ENCODE measurements at regions of chr9 and their contacts with region 1.

Region 1: DNA sequence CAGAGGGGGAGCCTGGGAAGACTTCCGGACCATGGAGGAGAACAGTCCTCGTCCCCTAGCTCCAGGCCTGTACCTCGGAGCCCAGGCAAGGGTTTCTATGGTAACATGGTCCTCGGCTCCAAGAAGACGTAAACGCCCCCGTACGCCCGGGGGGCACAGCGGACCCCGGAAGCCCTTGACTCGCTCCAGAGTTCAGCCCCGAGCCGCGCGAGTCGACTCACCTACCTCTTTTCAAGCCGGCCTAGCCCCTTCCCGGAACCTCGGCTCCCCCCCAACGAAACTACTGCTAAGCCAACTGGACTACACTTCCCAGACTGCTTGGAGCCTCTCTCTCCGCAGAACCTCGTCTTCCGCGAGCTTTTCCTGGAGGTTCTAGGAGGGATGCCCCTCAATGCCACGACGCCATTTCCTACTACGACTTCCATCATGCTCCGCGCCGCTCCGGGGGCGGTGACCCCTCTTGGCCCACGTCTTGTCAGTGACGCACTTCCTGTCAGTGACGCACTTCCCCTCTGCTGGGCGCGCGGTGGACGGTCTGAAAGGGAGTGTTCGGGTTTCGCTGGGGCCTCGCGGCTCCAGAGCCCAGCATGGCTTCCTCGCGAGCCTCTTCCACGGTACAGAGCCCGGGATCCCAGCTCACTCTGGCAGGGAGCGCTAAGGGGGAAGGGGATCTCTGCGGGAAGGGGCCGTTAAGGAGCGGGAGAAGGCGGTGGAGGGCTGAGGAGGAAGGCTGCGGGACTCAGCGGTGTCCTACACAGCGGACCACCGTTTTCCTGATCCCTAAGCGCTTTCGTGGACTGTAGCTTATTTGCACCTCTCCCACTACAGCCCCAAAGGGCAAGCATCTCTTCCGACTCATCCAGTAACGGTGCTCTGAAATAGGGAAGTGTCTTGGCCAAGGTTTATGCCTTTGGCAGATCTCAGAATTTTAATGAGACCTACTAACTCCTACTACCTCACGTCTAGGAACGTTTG is at the starts of genes CDC26 and PRPF4:
- DNase-seq: peak; percentile 95
- ATAC-seq: peak; percentile 89
- H3K4me3 ChIP-seq: peak within 1 kb of the TSS; percentile 75 to 98 (median 84)
- H3K4me3 Mint-ChIP-seq: no peak within 1 kb of the TSS
- H3K27ac ChIP-seq: peak within 1 kb of the TSS; percentile 94 to 97
- H3K27ac Mint-ChIP-seq: no peak within 1 kb of the TSS
- H3K4me1 ChIP-seq: peaks cover 9 to 16% of the 10 kb centered on the region in 2 donors
- H3K4me1 Mint-ChIP-seq: peaks cover 12% of the 10 kb centered on the region
- H3K27me3 ChIP-seq: no peaks in the 10 kb centered on the region
- H3K27me3 Mint-ChIP-seq: no peaks in the 10 kb centered on the region
- CTCF ChIP-seq: no peak
- total RNA-seq, gene CDC26: 28.9 and 32.9 TPM in 2 replicates
- total RNA-seq, gene PRPF4: 28.2 and 30.8 TPM in 2 replicates

Region 2: GRCh38 chr9:112914514-112914913 is 360.9 kb before region 1 on chr9:
- CTCF ChIA-PET with region 1: no interaction called
- POLR2A ChIA-PET with region 1: no interaction called
- intact Hi-C with region 1: no loop called
- DNase-seq: no peak
- ATAC-seq: no peak
- H3K4me3 ChIP-seq: no peak overlapping the region
- H3K4me3 Mint-ChIP-seq: no peak overlapping the region
- H3K27ac ChIP-seq: no peak overlapping the region
- H3K27ac Mint-ChIP-seq: no peak overlapping the region
- H3K4me1 ChIP-seq: no peaks in the 10 kb centered on the region
- H3K4me1 Mint-ChIP-seq: no peaks in the 10 kb centered on the region
- H3K27me3 ChIP-seq: no peaks in the 10 kb centered on the region
- H3K27me3 Mint-ChIP-seq: peaks cover 29% of the 10 kb centered on the region
- CTCF ChIP-seq: no peak

Region 3: GRCh38 chr9:113150670-113151611 is 124.5 kb before region 1 on chr9 and contains the start of gene SLC31A2:
- CTCF ChIA-PET with region 1: interaction called, 4 read pairs
- POLR2A ChIA-PET with region 1: interaction called, 3 read pairs
- intact Hi-C with region 1: loop called (anchors 1 kb)
- DNase-seq: peak; percentile 85
- ATAC-seq: peak; percentile 93
- H3K4me3 ChIP-seq: peak within 1 kb of the TSS; percentile 73 to 83 (median 76)
- H3K4me3 Mint-ChIP-seq: peak within 1 kb of the TSS; percentile 88
- H3K27ac ChIP-seq: peak within 1 kb of the TSS in 1 of 2 donors; percentile 25
- H3K27ac Mint-ChIP-seq: peak within 1 kb of the TSS; percentile 50
- H3K4me1 ChIP-seq: peaks cover 0 to 19% of the 10 kb centered on the region in 2 donors
- H3K4me1 Mint-ChIP-seq: peaks cover 11% of the 10 kb centered on the region
- H3K27me3 ChIP-seq: no peaks in the 10 kb centered on the region
- H3K27me3 Mint-ChIP-seq: peaks cover 2% of the 10 kb centered on the region
- CTCF ChIP-seq: peak; percentile 56
- total RNA-seq, gene SLC31A2: 2.3 and 3.0 TPM in 2 replicates

Region 4: GRCh38 chr9:113340017-113340699 is 64.7 kb after region 1 on chr9 and contains the start of gene WDR31:
- CTCF ChIA-PET with region 1: interaction called, 17 read pairs
- POLR2A ChIA-PET with region 1: interaction called, 3 read pairs
- intact Hi-C with region 1: loop called (anchors 1 kb)
- DNase-seq: peak; percentile 84
- ATAC-seq: peak; percentile 97
- H3K4me3 ChIP-seq: peak within 1 kb of the TSS; percentile 42 to 85 (median 73)
- H3K4me3 Mint-ChIP-seq: peak within 1 kb of the TSS; percentile 90
- H3K27ac ChIP-seq: peak within 1 kb of the TSS in 1 of 2 donors; percentile 41
- H3K27ac Mint-ChIP-seq: peak within 1 kb of the TSS; percentile 84
- H3K4me1 ChIP-seq: peaks cover 8 to 12% of the 10 kb centered on the region in 2 donors
- H3K4me1 Mint-ChIP-seq: peaks cover 16% of the 10 kb centered on the region
- H3K27me3 ChIP-seq: no peaks in the 10 kb centered on the region
- H3K27me3 Mint-ChIP-seq: peaks cover 8% of the 10 kb centered on the region
- CTCF ChIP-seq: no peak
- total RNA-seq, gene WDR31: 0.62 and 1.0 TPM in 2 replicates

Region 5: GRCh38 chr9:113446323-113446740 is 170.9 kb after region 1 on chr9:
- CTCF ChIA-PET with region 1: interaction called, 24 read pairs
- POLR2A ChIA-PET with region 1: no interaction called
- intact Hi-C with region 1: no loop called
- DNase-seq: peak; percentile 58
- ATAC-seq: no peak
- H3K4me3 ChIP-seq: no peak overlapping the region
- H3K4me3 Mint-ChIP-seq: no peak overlapping the region
- H3K27ac ChIP-seq: no peak overlapping the region
- H3K27ac Mint-ChIP-seq: no peak overlapping the region
- H3K4me1 ChIP-seq: no peaks in the 10 kb centered on the region
- H3K4me1 Mint-ChIP-seq: no peaks in the 10 kb centered on the region
- H3K27me3 ChIP-seq: no peaks in the 10 kb centered on the region
- H3K27me3 Mint-ChIP-seq: no peaks in the 10 kb centered on the region
- CTCF ChIP-seq: peak; percentile 80

Region 6: DNA sequence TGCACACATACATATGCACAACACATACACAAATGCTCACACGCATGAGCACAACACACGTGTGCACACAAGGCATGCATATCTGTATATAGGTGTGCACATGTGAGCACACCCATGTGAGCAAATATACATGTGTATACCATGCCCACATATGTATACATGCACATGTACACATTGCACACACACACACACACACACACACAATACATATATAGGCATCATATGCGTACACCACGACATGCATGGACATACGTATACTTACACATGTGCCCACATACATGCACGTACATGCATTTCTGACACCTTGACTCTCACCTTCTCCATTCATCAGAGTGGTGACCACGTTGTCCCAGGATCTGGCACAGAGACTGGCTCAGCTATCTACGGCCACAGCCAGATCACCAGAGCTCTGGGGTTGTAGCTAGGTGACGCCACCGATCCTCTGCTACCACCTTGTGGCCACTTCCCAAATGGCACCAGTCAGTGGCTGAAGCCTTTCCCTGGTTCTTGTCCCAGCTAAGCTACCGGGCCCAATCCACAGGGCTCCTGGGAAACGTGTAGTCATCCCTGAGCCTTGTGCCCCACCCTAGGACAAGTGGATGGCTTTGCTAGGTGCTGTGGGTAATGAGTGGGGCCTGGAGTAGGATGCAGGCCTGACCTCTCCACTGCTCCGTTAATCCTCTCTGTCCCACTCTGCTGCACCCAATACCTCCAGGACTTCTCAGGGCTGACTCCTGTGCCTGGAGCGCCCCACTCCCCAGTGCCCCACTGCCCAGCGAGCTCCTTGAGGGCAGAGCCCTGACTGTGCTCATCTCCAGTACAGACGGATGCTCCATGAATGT is 382.5 kb after region 1 on chr9:
- CTCF ChIA-PET with region 1: interaction called, 153 read pairs
- POLR2A ChIA-PET with region 1: no interaction called
- intact Hi-C with region 1: no loop called
- DNase-seq: peak; percentile 86
- ATAC-seq: peak; percentile 93
- H3K4me3 ChIP-seq: no peak overlapping the region
- H3K4me3 Mint-ChIP-seq: no peak overlapping the region
- H3K27ac ChIP-seq: no peak overlapping the region
- H3K27ac Mint-ChIP-seq: peak overlapping the region; percentile 71
- H3K4me1 ChIP-seq: no peaks in the 10 kb centered on the region
- H3K4me1 Mint-ChIP-seq: no peaks in the 10 kb centered on the region
- H3K27me3 ChIP-seq: peaks cover 0 to 17% (median 7%) of the 10 kb centered on the region in 4 experiments
- H3K27me3 Mint-ChIP-seq: peaks cover 34% of the 10 kb centered on the region
- CTCF ChIP-seq: peak; percentile 92

Measured in B cell (primary cell).